Activated T-helper 1 cell treated with anti-CD3 and anti-CD28 coated beads, Interleukin-12 subunit alpha, Interleukin-12 subunit beta, Interleukin-2, Interleukin-4 antibody, amounts not matched to agents 30 ng/mL and 10 ng/mL and 1 ng/mL, durations not matched to agents 14 hours and 24 hours and 36 hours (primary cell): ENCODE measurements at regions of chr15 and their contacts with region 1.

Region 1: DNA sequence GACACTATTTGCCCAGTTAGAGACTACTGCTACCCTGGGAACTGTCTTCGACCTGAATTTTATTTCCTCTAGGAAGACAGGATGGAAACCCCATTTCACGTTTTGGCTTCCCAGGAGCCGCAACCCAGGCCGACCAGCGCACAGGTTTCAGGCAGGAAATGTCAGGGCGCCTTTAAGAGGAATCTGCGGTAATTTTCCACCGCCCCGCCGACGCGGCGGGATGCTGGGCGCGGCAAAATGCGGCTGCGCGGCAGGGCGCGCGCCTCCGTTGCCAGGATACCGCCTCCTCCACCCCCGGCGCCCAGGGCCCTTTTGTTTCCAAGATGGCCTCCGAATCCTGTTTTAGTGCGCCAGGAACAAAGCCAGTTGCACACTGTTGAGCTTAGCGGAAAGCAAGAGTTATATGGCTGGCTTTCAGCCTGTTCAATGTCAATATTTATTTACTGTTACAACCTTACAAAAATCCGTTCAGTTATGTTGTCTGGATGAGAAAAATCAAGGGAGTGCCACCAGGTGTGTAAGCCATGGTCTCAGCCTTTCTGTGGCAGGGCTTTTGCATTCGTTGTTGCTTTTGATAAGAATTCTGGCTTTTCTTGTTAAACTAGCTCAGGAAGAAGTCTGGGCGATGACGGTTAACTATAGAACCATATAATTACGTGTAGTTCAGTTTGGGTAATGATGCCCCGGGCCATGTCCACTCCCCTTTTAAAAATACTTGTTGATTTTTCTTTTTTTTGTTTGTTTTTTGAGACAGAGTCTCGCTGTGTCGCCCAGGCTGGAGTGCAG is 79.7 kb upstream of the CHD2 start:
- DNase-seq: peak; percentile 86
- H3K4me3 Mint-ChIP-seq: peak overlapping the region; percentile 86
- H3K27ac Mint-ChIP-seq: peak overlapping the region; percentile 96
- H3K4me1 Mint-ChIP-seq: peaks cover 58% of the 10 kb centered on the region
- H3K27me3 Mint-ChIP-seq: no peaks in the 10 kb centered on the region

Region 2: GRCh38 chr15:92845126-92845508 is 24.7 kb after region 1 on chr15:
- intact Hi-C with region 1: loop called (anchors 1 kb)
- DNase-seq: no peak
- H3K4me3 Mint-ChIP-seq: peak overlapping the region; percentile 77
- H3K27ac Mint-ChIP-seq: peak overlapping the region; percentile 96
- H3K4me1 Mint-ChIP-seq: peaks cover 68% of the 10 kb centered on the region
- H3K27me3 Mint-ChIP-seq: no peaks in the 10 kb centered on the region